ENCODE measurements at regions of chr7 and their contacts with region 1.

Region 1: GRCh38 chr7:44973610-44974401 is 5.0 kb downstream of the MYO1G start:
- DNase-seq: no peak
- H3K4me3 ChIP-seq: no peak overlapping the region
- H3K27me3 ChIP-seq: no peaks in the 10 kb centered on the region
- CTCF ChIP-seq: peak; percentile 73

Region 2: GRCh38 chr7:44955733-44956132 is 18.1 kb before region 1 on chr7:
- CTCF ChIA-PET with region 1: interaction called, 11 read pairs
- POLR2A ChIA-PET with region 1: no interaction called
- DNase-seq: no peak
- H3K4me3 ChIP-seq: no peak overlapping the region
- H3K27me3 ChIP-seq: peaks cover 3% of the 10 kb centered on the region
- CTCF ChIP-seq: no peak

Region 3: GRCh38 chr7:44962483-44963251 is 11.1 kb before region 1 on chr7:
- CTCF ChIA-PET with region 1: interaction called, 38 read pairs
- POLR2A ChIA-PET with region 1: no interaction called
- DNase-seq: no peak
- H3K4me3 ChIP-seq: peak overlapping the region; percentile 38
- H3K27me3 ChIP-seq: peaks cover 3% of the 10 kb centered on the region
- CTCF ChIP-seq: no peak

Region 4: DNA sequence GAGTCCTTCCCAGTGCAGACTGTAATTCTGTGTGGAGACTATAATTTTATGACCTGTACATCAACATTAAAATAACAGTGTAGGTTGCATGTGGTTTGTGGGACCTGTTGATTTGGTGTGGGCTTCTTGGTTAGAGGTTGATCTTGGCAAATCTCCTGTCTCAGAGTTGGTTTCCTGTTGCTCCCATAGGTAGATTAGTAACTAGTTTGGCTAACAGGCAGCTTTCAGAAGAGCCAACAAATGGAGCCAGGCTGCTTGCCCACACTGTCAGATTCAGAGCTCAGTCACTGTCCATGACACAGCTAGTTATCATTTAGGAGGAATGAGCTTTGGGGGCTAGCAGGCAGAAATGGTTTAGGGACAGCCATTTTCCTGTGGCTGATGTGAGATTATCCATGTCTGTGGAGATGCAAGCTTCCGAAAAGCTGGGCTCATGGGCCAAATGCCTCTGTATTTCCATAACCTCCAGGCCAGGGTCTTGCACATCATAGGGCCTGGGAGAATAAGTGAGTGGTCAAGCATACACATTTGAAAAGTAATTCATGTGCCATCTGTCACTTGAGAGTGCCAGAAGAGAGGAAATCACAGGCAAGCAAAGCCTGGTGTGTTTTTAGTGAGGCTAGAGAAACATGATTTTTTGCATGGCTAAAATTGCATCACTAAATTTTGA is 59.6 kb after region 1 on chr7:
- CTCF ChIA-PET with region 1: no interaction called
- POLR2A ChIA-PET with region 1: no interaction called
- DNase-seq: no peak
- H3K4me3 ChIP-seq: no peak overlapping the region
- H3K27me3 ChIP-seq: no peaks in the 10 kb centered on the region
- CTCF ChIP-seq: no peak

Region 5: DNA sequence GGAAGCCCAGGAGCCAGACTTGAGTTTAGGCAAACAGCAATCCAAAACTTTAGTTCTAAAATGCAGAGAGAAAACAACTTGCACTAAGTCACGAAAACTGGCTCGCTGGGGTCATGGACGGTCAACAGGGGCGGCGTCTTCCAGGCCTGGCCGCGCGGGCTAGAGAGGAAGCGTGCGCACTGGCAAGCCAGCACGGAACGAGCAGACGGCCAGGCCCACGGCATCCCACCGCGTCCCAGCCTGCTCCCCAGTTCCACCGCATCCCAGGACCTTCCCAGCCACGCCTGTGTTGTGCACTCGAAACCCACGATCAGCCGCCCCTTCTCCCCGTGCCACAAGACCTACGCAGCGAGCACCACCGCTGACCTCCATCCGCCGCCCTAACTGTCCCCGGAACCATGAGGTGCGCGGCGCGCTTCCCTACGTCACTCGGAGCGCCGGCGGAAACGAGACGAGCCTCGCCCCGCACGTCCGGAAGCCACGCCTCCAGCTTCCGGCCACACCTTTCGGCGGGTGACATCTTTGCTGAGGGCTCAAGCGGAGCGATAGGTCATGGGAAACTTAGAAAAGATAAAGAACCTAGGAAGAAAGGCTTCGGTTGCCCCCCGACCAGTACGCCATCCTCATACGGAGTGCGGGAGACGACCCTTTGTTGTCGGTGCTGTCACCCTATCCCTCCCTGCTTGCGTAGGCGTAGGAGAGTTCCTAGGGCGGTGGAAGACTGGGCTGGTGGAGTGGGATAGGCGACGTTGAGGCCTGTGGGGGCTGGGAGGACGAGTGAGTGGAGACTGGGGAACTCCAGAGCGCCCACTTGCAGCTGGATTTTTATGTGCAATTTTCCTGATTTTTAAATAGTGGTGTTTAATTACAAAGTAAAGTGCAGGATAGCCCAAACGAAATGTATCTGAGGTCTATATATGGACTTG is 137.8 kb after region 1 on chr7 and contains the start of gene TBRG4:
- CTCF ChIA-PET with region 1: interaction called, 12 read pairs
- POLR2A ChIA-PET with region 1: no interaction called
- DNase-seq: peak; percentile 61
- H3K4me3 ChIP-seq: peak within 1 kb of the TSS; percentile 96
- H3K27me3 ChIP-seq: peaks cover 2% of the 10 kb centered on the region
- CTCF ChIP-seq: peak; percentile 51
- polyA plus RNA-seq, gene TBRG4: 55.0 and 75.5 TPM in 2 replicates

Region 6: GRCh38 chr7:45267266-45267665 is 293.5 kb after region 1 on chr7:
- CTCF ChIA-PET with region 1: no interaction called
- POLR2A ChIA-PET with region 1: no interaction called
- DNase-seq: no peak
- H3K4me3 ChIP-seq: no peak overlapping the region
- H3K27me3 ChIP-seq: no peaks in the 10 kb centered on the region
- CTCF ChIP-seq: no peak